ENCODE measurements at regions of chr5 and their contacts with region 1.

Region 1: GRCh38 chr5:112419986-112420864 is 1.1 kb upstream of the EPB41L4A start:
- DNase-seq: peak; percentile 94

Region 2: GRCh38 chr5:112174959-112175594 is 245.1 kb before region 1 on chr5:
- intact Hi-C with region 1: loop called in 1 of 2 experiments (anchors 10 kb)
- DNase-seq: no peak

Region 3: GRCh38 chr5:112210430-112211005 is 209.7 kb before region 1 on chr5:
- intact Hi-C with region 1: loop called in 1 of 2 experiments (anchors 2 kb)
- DNase-seq: no peak

Region 4: GRCh38 chr5:112228667-112229066 is 191.6 kb before region 1 on chr5:
- intact Hi-C with region 1: loop called in 1 of 2 experiments (anchors 10 kb)
- DNase-seq: peak; percentile 85

Measured in posterior vena cava (tissue), 2 donors.